Tibial artery (tissue), 4 donors: ENCODE measurements at regions of chr14 and their contacts with region 1.

Region 1: GRCh38 chr14:64914237-64914971 is at the start of gene CHURC1:
- DNase-seq: peak; percentile 99
- H3K4me3 ChIP-seq: peak within 1 kb of the TSS; percentile 84 to 99
- H3K27ac ChIP-seq: peak within 1 kb of the TSS; percentile 95 to 99
- H3K4me1 ChIP-seq: peaks cover 0 to 49% (median 30%) of the 10 kb centered on the region in 4 donors
- H3K27me3 ChIP-seq: no peaks in the 10 kb centered on the region
- CTCF ChIP-seq: no peak

Region 2: GRCh38 chr14:64696355-64696857 is 218.0 kb before region 1 on chr14:
- intact Hi-C with region 1: no loop called
- DNase-seq: peak; percentile 32 to 84
- H3K4me3 ChIP-seq: peak overlapping the region; percentile 40 to 44
- H3K27ac ChIP-seq: peak overlapping the region; percentile 90 to 93
- H3K4me1 ChIP-seq: peaks cover 0 to 65% (median 23%) of the 10 kb centered on the region in 4 donors
- H3K27me3 ChIP-seq: no peaks in the 10 kb centered on the region
- CTCF ChIP-seq: no peak

Region 3: GRCh38 chr14:64986578-64987571 is 72.5 kb after region 1 on chr14 and contains the start of gene FNTB:
- intact Hi-C with region 1: loop called (anchors 5 kb)
- DNase-seq: peak; percentile 95 to 97
- H3K4me3 ChIP-seq: peak within 1 kb of the TSS; percentile 68 to 72
- H3K27ac ChIP-seq: peak within 1 kb of the TSS; percentile 83 to 89
- H3K4me1 ChIP-seq: peaks cover 0 to 15% (median 11%) of the 10 kb centered on the region in 4 donors
- H3K27me3 ChIP-seq: no peaks in the 10 kb centered on the region
- CTCF ChIP-seq: peak; percentile 61 to 79